CD4-positive, alpha-beta memory T cell (primary cell): ENCODE measurements at regions of chr3 and their contacts with region 1.

Region 1: DNA sequence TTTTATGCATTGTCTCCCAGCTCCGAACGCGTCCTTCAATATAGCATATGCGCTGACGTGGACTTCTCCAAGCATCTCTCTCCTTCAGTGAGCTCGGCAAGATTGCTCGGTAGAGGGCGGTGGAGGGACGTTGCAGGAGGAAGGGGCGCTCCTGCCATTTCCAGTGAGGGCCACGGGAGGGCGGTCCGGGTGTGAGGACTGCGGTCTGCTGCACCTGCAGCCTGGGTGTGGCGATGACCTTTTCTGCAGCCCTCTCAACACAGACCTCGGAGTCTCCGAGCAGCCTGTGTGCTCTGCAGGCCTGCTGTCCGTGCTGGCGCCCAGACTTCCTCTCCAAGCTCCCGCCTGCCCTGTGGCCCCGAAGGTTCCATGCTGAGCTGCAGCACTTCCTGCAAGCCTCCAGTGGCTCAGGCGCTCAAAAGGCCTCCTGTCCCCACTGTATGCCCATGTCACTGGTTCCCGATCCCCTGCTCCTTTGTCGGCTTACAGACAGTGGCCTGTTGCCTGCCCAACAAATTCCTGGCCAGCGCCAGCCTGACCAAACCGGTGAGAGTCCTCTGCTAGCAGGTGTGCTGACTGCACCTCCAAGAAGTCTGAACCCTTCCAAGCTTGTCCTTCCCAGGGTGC is 8.9 kb upstream of the RTP3 start:
- DNase-seq: peak; percentile 86 to 90 (median 88)
- H3K4me3 ChIP-seq: peak overlapping the region; percentile 23 to 38
- H3K4me3 Mint-ChIP-seq: peak overlapping the region; percentile 57 to 80 (median 72)
- H3K27ac ChIP-seq: no peak overlapping the region
- H3K27ac Mint-ChIP-seq: peak overlapping the region in 3 of 7 donors; percentile 36 to 64 (median 53)
- H3K4me1 ChIP-seq: peaks cover 22% of the 10 kb centered on the region
- H3K4me1 Mint-ChIP-seq: peaks cover 5 to 17% (median 14%) of the 10 kb centered on the region in 4 donors
- H3K27me3 ChIP-seq: no peaks in the 10 kb centered on the region
- H3K27me3 Mint-ChIP-seq: no peaks in the 10 kb centered on the region

Region 2: DNA sequence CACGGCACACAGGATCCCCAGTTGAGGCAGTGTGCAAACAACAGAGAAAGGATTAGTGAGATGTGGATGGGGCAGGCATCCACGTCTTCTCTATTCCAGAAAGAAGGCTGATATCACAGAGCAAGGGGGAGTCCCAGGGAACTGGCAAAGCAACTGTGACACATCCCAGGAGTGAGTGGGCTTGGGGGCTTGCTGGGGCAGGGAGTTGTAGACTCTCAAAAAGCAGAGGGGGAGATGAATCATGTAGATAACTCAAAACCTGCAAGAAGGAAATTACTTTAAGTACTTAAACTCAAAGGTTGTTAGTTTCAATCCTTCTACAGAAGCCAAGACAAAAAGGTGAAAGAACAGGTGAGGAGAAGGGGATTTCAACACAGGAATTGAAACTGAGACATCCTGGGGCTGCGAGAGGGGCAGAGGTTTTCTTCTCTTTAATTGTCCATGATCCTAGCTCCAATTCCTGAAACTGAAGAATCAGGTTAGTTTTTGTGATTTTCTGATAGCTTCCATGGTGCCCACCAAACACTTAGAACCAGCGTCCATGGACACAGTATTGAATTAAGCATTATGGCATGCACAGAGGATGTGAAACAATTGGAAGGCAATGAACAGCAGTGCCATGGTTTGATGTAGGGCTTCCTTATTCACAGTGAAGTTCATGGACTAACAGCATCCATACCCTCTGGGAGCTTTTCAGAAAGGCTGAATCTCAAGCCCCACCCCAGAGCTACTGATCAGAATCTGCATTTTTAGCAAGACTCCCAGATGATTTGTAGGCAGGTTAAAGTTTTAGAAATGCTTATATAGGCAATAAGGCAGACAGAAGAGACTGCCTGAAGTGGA is 194.6 kb before region 1 on chr3:
- CTCF ChIA-PET with region 1: no interaction called
- POLR2A ChIA-PET with region 1: no interaction called
- intact Hi-C with region 1: no loop called
- DNase-seq: no peak
- H3K4me3 ChIP-seq: no peak overlapping the region
- H3K4me3 Mint-ChIP-seq: peak overlapping the region in 7 of 8 donors; percentile 5 to 68 (median 47)
- H3K27ac ChIP-seq: peak overlapping the region; percentile 46
- H3K27ac Mint-ChIP-seq: peak overlapping the region; percentile 51 to 86 (median 83)
- H3K4me1 ChIP-seq: peaks cover 69% of the 10 kb centered on the region
- H3K4me1 Mint-ChIP-seq: peaks cover 50 to 89% (median 66%) of the 10 kb centered on the region in 4 donors
- H3K27me3 ChIP-seq: no peaks in the 10 kb centered on the region
- H3K27me3 Mint-ChIP-seq: no peaks in the 10 kb centered on the region

Region 3: DNA sequence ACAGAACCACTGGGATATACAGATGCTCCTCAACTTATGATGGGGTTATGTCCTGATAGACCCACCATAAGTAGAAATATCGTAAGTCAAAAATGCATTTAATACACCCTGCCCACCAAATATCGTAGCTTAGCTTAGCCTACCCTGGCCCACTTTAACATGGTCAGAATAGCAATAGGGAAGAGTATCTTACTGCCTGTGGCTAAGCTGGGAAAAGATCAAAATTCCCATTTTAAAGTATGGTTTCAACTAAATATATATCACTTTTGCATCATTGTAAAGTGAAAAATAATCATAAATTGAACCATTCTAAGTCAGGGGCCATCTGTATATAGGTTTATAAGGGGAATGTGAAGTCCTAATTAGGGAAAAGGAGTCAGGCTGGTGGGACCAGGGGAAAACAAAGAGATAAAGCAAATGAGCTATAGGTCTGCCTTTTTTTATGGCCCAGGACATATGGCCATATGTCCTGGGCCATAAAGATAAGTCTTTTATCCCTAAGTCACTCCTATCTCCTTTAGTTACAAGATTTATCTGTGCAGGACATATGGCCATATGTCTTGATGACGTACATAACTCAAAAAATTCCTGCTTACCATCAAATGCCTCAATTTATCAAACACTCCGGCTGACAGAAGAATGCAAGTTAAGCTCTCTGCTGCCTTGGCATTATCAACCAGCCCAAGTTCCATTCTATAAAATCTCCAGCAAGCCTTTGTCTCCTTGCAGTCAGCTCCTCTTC is 20.2 kb after region 1 on chr3:
- CTCF ChIA-PET with region 1: interaction called, 16 read pairs
- POLR2A ChIA-PET with region 1: no interaction called
- intact Hi-C with region 1: no loop called
- DNase-seq: no peak
- H3K4me3 ChIP-seq: no peak overlapping the region
- H3K4me3 Mint-ChIP-seq: no peak overlapping the region
- H3K27ac ChIP-seq: no peak overlapping the region
- H3K27ac Mint-ChIP-seq: no peak overlapping the region
- H3K4me1 ChIP-seq: no peaks in the 10 kb centered on the region
- H3K4me1 Mint-ChIP-seq: peaks cover 4 to 7% (median 6%) of the 10 kb centered on the region in 4 donors
- H3K27me3 ChIP-seq: no peaks in the 10 kb centered on the region
- H3K27me3 Mint-ChIP-seq: peaks cover 2 to 5% of the 10 kb centered on the region in 2 donors

Region 4: DNA sequence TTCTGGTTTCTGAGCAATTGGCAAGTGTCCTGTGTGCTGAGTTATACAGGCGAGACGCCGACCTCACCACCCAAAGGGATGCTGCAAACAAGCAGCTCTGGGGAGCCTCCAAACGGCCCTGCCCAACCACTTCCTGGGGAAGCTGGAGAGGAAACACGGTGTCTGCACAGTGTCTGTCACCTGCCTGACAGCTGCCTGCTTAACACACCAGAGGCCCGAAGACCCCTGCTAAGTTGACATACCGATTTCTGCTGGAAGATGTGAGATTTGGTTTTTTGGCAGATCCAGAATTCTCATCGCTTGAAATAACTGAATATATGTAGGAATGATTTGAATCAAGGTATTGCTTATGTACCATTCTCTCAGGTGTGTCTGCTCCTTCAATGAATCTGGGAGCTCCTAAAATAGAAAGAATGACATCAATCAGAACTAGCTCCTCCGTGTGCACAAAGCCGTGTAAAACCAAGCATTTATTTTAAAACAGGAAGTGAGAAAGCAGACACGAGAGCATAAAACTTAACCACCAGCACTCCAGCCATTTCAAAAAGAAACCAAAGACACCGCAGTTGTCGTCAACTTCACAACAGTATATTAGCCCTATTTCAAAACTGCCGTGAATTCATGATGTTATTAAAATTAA is 50.1 kb after region 1 on chr3:
- CTCF ChIA-PET with region 1: interaction called, 118 read pairs
- POLR2A ChIA-PET with region 1: interaction called, 46 read pairs
- intact Hi-C with region 1: loop called (anchors 1 kb)
- DNase-seq: peak; percentile 83 to 95 (median 86)
- H3K4me3 ChIP-seq: peak overlapping the region; percentile 5 to 42
- H3K4me3 Mint-ChIP-seq: peak overlapping the region; percentile 65 to 85 (median 78)
- H3K27ac ChIP-seq: peak overlapping the region; percentile 51
- H3K27ac Mint-ChIP-seq: peak overlapping the region; percentile 88 to 97 (median 96)
- H3K4me1 ChIP-seq: peaks cover 52% of the 10 kb centered on the region
- H3K4me1 Mint-ChIP-seq: peaks cover 29 to 60% (median 46%) of the 10 kb centered on the region in 4 donors
- H3K27me3 ChIP-seq: no peaks in the 10 kb centered on the region
- H3K27me3 Mint-ChIP-seq: no peaks in the 10 kb centered on the region

Region 5: DNA sequence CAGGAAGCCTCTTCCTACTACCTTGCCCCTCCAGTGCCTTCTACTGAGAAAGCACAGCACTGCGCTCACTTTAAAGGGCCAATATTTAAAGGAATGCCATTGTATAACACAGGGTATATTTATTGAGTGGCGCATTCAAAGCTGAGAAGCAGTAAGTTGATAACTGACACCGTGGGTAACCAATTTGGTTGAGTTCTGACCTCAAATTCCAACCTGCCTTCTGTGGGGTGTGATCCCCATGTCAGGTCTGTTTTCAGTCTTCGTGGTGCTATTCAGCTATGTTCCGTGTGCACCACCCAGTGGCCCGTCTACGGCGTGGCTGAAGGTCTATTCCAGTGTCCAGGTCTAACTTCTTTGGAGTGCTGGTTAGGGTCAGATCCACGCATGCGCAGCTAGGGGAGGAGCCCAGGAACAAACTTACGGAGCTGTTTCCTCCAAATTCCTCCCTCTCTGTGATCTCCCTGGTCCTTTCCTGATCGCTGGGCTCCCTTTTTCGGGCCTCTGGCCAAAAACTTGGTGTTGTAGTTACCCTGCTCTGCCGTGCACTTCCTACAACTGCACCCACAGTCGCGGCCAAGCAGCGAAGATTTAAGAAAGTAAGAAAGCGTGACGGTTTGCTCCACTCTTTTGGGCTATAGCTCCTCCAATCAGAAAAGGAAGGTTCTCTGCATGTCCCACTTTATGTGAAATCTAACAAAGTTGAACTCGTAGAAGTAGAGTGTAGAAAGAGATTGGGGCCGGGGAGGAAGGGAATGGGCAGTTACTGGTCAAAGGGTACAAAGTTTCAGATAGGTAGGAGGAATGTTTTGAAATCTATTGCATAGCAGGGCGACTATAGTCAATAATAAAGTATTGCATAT is 69.6 kb after region 1 on chr3:
- CTCF ChIA-PET with region 1: interaction called, 331 read pairs
- POLR2A ChIA-PET with region 1: interaction called, 59 read pairs
- intact Hi-C with region 1: loop called (anchors 1 kb)
- DNase-seq: peak; percentile 68 to 74 (median 73)
- H3K4me3 ChIP-seq: peak overlapping the region in 1 of 2 donors; percentile 25
- H3K4me3 Mint-ChIP-seq: peak overlapping the region; percentile 76 to 87 (median 82)
- H3K27ac ChIP-seq: no peak overlapping the region
- H3K27ac Mint-ChIP-seq: peak overlapping the region in 6 of 7 donors; percentile 13 to 71 (median 36)
- H3K4me1 ChIP-seq: peaks cover 14% of the 10 kb centered on the region
- H3K4me1 Mint-ChIP-seq: peaks cover 10 to 17% (median 15%) of the 10 kb centered on the region in 4 donors
- H3K27me3 ChIP-seq: no peaks in the 10 kb centered on the region
- H3K27me3 Mint-ChIP-seq: peaks cover 1 to 4% of the 10 kb centered on the region in 2 donors

Region 6: GRCh38 chr3:46604127-46604526 is 115.3 kb after region 1 on chr3:
- CTCF ChIA-PET with region 1: interaction called, 10 read pairs
- POLR2A ChIA-PET with region 1: no interaction called
- intact Hi-C with region 1: no loop called
- DNase-seq: no peak
- H3K4me3 ChIP-seq: no peak overlapping the region
- H3K4me3 Mint-ChIP-seq: no peak overlapping the region
- H3K27ac ChIP-seq: no peak overlapping the region
- H3K27ac Mint-ChIP-seq: no peak overlapping the region
- H3K4me1 ChIP-seq: no peaks in the 10 kb centered on the region
- H3K4me1 Mint-ChIP-seq: no peaks in the 10 kb centered on the region
- H3K27me3 ChIP-seq: no peaks in the 10 kb centered on the region
- H3K27me3 Mint-ChIP-seq: no peaks in the 10 kb centered on the region

Region 7: DNA sequence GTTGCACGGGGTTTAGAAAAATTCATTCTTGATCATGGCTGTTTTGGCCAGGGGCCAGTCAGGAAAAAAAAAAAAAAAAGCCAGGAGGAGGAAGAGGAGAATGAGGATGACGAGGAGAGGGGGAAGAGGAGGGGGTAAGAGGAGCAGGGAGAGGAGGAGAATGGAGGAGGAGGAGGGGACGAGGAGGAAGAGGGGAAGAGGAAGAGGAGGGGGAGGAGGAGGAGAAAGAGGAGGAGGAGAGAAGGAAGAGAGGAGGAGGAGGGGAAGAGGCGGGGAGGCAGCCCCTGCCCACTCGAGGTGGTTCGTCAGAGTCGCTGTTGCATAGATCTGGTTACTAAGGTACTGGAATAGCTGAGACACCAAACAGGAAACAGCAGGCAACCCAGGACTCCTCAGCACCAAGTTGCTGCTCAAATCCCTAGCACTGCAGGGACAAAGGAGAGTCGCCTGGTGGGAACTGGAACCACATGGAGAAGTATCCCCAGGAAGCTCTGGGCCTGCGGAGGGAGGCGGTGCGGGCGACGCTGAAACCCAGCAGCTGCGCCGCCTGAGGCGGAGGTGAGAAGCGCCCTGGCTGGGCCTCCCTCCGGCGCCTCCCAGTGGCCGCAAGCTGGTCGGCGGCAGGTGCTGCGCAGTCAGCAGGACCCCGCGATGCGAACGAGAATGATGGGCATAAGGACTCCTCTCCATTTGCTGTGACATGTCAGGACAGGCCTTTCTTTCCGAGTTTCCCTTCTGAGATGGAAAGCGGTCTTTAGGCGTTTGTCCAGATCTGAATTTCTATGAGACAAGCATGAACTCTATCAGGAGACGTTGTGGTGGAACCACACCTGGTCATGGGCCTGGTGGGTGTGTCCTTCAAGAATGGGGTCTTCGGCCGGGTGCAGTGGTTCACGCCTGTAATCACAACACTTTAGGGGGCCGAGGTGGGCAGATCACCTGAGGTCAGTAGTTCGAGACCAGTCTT is 141.0 kb after region 1 on chr3:
- CTCF ChIA-PET with region 1: interaction called, 262 read pairs
- POLR2A ChIA-PET with region 1: interaction called, 30 read pairs
- intact Hi-C with region 1: loop called (anchors 1 kb)
- DNase-seq: peak; percentile 66 to 77 (median 73)
- H3K4me3 ChIP-seq: peak overlapping the region in 1 of 2 donors; percentile 46
- H3K4me3 Mint-ChIP-seq: peak overlapping the region; percentile 51 to 80 (median 72)
- H3K27ac ChIP-seq: no peak overlapping the region
- H3K27ac Mint-ChIP-seq: peak overlapping the region in 6 of 7 donors; percentile 29 to 95 (median 72)
- H3K4me1 ChIP-seq: peaks cover 9% of the 10 kb centered on the region
- H3K4me1 Mint-ChIP-seq: peaks cover 7 to 25% (median 16%) of the 10 kb centered on the region in 4 donors
- H3K27me3 ChIP-seq: no peaks in the 10 kb centered on the region
- H3K27me3 Mint-ChIP-seq: peaks cover 2 to 3% of the 10 kb centered on the region in 2 donors